ENCODE measurements at regions of chr1 and their contacts with region 1.

Region 1: GRCh38 chr1:219385786-219386427 is 212.2 kb downstream of the LYPLAL1 start:
- DNase-seq: peak; percentile 5
- ATAC-seq: peak; percentile 99
- H3K4me3 ChIP-seq: no peak overlapping the region
- H3K27ac ChIP-seq: no peak overlapping the region
- H3K4me1 ChIP-seq: no peaks in the 10 kb centered on the region
- H3K27me3 ChIP-seq: no peaks in the 10 kb centered on the region
- CTCF ChIP-seq: peak; percentile 78 to 91 (median 90)
- EP300 ChIP-seq: no peak
- POLR2A ChIP-seq: no peak
- RAD21 ChIP-seq: peak; percentile 96

Region 2: DNA sequence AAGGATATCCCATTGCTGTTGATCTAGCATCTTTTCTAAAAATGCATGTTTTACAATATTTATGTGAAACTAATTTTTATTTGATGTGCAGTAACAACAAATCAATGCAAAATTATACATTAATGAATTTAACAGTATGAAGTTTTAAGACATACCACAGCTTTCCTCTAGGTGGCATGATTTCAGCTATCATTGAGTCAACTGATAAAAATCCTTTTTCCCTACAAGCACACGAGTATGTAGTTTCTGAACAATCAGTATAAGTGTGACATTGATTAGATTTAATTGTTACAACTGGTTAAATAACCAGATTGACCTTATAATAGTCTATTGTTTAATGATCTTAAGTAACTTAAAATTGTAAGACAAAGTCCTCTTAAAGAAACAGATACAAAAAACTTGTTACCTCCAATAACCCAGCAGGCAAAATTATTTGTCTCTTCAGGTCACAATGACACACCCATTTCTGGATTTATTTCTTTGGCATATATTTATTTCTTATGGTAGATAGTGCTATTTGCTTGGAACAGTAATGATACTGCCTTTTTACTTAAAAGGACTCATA is 1046.6 kb before region 1 on chr1:
- CTCF ChIA-PET with region 1: interaction called, 6 read pairs
- POLR2A ChIA-PET with region 1: no interaction called
- RAD21 ChIA-PET with region 1: no interaction called
- SMC1A ChIA-PET with region 1: interaction called, 3 read pairs
- in situ Hi-C with region 1: no loop called
- intact Hi-C with region 1: loop called (anchors 5 kb)
- DNase-seq: no peak
- ATAC-seq: peak; percentile 69
- H3K4me3 ChIP-seq: no peak overlapping the region
- H3K27ac ChIP-seq: no peak overlapping the region
- H3K4me1 ChIP-seq: no peaks in the 10 kb centered on the region
- H3K27me3 ChIP-seq: no peaks in the 10 kb centered on the region
- CTCF ChIP-seq: peak; percentile 58 to 65 (median 58)
- EP300 ChIP-seq: no peak
- POLR2A ChIP-seq: no peak
- RAD21 ChIP-seq: peak; percentile 58

Region 3: GRCh38 chr1:218686258-218686657 is 699.6 kb before region 1 on chr1:
- CTCF ChIA-PET with region 1: no interaction called
- POLR2A ChIA-PET with region 1: no interaction called
- RAD21 ChIA-PET with region 1: no interaction called
- SMC1A ChIA-PET with region 1: no interaction called
- in situ Hi-C with region 1: no loop called
- intact Hi-C with region 1: loop called (anchors 10 kb)
- DNase-seq: no peak
- ATAC-seq: no peak
- H3K4me3 ChIP-seq: no peak overlapping the region
- H3K27ac ChIP-seq: no peak overlapping the region
- H3K4me1 ChIP-seq: no peaks in the 10 kb centered on the region
- H3K27me3 ChIP-seq: no peaks in the 10 kb centered on the region
- CTCF ChIP-seq: no peak
- EP300 ChIP-seq: no peak
- POLR2A ChIP-seq: no peak
- RAD21 ChIP-seq: no peak

Region 4: GRCh38 chr1:219209578-219209977 is 176.3 kb before region 1 on chr1:
- CTCF ChIA-PET with region 1: interaction called, 9 read pairs
- POLR2A ChIA-PET with region 1: no interaction called
- RAD21 ChIA-PET with region 1: interaction called, 4 read pairs
- SMC1A ChIA-PET with region 1: interaction called, 4 read pairs
- in situ Hi-C with region 1: no loop called
- intact Hi-C with region 1: loop called (anchors 2 kb)
- DNase-seq: no peak
- ATAC-seq: no peak
- H3K4me3 ChIP-seq: no peak overlapping the region
- H3K27ac ChIP-seq: no peak overlapping the region
- H3K4me1 ChIP-seq: no peaks in the 10 kb centered on the region
- H3K27me3 ChIP-seq: no peaks in the 10 kb centered on the region
- CTCF ChIP-seq: no peak
- EP300 ChIP-seq: no peak
- POLR2A ChIP-seq: no peak
- RAD21 ChIP-seq: no peak

Region 5: GRCh38 chr1:219465212-219466093 is 79.5 kb after region 1 on chr1:
- CTCF ChIA-PET with region 1: no interaction called
- POLR2A ChIA-PET with region 1: no interaction called
- RAD21 ChIA-PET with region 1: no interaction called
- SMC1A ChIA-PET with region 1: no interaction called
- in situ Hi-C with region 1: no loop called
- intact Hi-C with region 1: no loop called
- DNase-seq: peak; percentile 43
- ATAC-seq: peak; percentile 55
- H3K4me3 ChIP-seq: no peak overlapping the region
- H3K27ac ChIP-seq: peak overlapping the region; percentile 80
- H3K4me1 ChIP-seq: peaks cover 37% of the 10 kb centered on the region
- H3K27me3 ChIP-seq: no peaks in the 10 kb centered on the region
- CTCF ChIP-seq: no peak
- EP300 ChIP-seq: peak; percentile 97
- POLR2A ChIP-seq: no peak
- RAD21 ChIP-seq: no peak; the same call in 1 of the 2 replicates

Region 6: GRCh38 chr1:219660666-219661463 is 275.0 kb after region 1 on chr1:
- CTCF ChIA-PET with region 1: interaction called, 5 read pairs
- POLR2A ChIA-PET with region 1: no interaction called
- RAD21 ChIA-PET with region 1: no interaction called
- SMC1A ChIA-PET with region 1: no interaction called
- in situ Hi-C with region 1: no loop called
- intact Hi-C with region 1: loop called (anchors 5 kb)
- DNase-seq: peak; percentile 27
- ATAC-seq: peak; percentile 92
- H3K4me3 ChIP-seq: 0 out of 2 replicates have a peak overlapping the region, but pooled peaks have one; percentile 12
- H3K27ac ChIP-seq: no peak overlapping the region
- H3K4me1 ChIP-seq: peaks cover 16% of the 10 kb centered on the region
- H3K27me3 ChIP-seq: no peaks in the 10 kb centered on the region
- CTCF ChIP-seq: peak; percentile 84 to 88 (median 88)
- EP300 ChIP-seq: no peak
- POLR2A ChIP-seq: no peak
- RAD21 ChIP-seq: peak; percentile 89